Heart left ventricle (tissue), 16 donors: ENCODE measurements at regions of chr18 and their contacts with region 1.

Region 1: DNA sequence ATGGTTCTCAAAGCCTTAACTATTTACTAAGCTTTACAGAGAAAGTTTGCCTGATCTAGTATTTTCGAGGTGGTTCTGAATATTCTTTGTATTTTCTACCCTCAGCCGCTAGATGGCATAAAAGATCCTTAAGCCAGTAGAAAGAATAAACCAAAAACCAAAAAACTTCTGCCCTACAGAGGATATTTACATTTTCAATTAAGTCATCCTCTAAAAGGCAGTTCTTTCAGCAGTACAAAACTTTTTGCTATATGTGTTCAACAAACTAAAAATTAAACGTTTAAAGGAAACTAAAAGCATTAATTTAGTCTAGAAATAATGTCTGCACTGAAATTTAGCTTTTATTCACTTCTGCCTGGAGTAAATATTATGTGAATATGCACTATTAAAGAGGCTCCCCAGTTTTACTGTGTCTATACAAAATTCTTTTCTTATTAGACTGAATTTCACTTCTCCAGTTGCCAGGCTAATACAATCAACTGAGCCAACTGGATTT is 297.5 kb downstream of the PIEZO2 start:
- DNase-seq: no peak
- ATAC-seq: no peak
- H3K4me3 ChIP-seq: no peak overlapping the region
- H3K27ac ChIP-seq: no peak overlapping the region
- H3K4me1 ChIP-seq: no peaks in the 10 kb centered on the region
- H3K27me3 ChIP-seq: peaks cover 0 to 6% (median 0%) of the 10 kb centered on the region in 9 donors
- CTCF ChIP-seq: peak; percentile 57 to 88 (median 75)
- POLR2A ChIP-seq: no peak

Region 2: DNA sequence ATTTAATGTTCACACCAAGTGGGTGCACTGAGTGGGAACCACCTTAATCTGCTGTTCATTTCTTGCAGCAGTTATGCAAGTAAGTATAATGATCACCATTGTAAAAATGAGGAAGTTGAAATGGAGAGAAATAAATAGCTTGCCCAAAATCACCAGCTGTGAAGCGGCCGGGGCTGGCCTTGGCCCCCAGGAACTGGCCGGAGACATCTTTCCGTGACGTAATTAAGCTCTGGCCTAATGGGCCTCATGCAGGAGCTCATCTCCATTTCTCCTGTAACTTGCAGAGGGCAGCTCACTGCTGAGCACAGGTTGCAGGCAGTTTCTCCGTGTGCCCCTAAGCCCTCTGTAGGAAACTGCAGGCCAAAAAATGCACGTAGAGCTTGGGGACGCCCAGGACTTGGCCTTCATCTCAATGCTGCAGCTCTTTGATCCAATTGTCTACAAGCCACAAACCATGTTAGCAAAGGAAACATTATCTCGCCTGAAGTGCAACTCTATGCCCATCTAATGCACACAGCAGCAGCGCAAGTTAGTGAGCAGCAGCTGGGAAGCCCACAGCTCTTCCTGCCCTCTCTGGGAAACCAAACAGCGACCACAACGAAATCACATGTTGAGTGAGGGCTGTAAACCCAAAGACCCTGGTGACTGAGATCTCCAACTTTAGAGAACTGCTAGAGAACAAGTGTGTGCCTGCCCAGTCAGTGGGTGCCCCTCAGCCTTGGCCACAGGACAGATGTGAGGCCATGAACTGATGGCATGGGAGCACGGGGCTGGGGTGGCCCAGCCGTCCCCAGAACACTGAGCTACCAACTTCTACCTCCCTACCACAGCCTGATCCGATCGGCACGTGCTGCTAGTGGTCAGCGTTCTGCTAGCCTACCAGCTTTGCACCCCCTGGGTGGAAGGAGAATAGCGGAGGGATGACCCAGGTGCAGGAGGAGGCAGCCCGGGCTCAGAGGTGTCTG is 368.6 kb before region 1 on chr18:
- intact Hi-C with region 1: no loop called
- DNase-seq: peak in 4 of 5 donors; percentile 48 to 71 (median 54)
- ATAC-seq: peak; percentile 35 to 73 (median 60)
- H3K4me3 ChIP-seq: no peak overlapping the region
- H3K27ac ChIP-seq: peak overlapping the region in 2 of 12 donors; percentile 0 to 32
- H3K4me1 ChIP-seq: peaks cover 0 to 26% (median 2%) of the 10 kb centered on the region in 12 donors
- H3K27me3 ChIP-seq: no peaks in the 10 kb centered on the region
- CTCF ChIP-seq: no peak
- POLR2A ChIP-seq: no peak

Region 3: DNA sequence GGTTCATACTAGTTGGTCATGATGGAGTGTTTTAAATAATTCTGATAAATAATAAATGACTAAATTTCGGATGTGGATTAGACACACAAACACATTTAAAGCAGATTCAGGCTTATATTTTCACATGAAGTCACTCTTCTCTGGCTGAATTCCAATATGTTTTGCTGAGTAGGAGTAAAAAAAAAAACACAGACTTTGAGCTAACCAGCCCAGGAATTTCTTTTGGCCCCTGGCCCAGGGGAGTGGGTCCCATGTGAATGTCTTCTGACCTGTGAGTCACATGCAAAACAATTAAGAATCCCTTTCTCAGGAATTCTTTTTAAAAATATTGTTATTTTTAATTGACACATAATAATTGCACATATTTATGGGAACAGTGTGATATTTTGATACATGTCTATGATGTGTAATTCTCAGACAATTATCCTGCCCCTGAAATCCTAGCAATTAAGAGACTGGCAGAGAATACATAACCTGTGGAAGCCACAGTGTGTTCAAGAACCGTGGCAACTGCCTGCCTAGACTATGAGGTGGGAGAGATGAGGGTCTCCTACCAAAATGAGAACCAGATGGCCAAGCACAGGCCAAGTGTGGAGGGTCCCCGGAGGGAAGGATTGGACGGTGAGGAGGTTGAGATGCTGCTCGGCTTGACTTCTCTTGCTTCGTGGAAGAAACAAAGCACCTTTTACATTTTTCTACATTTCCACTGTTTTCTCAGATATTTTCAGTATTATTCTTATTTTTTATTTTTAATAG is 61.1 kb after region 1 on chr18:
- intact Hi-C with region 1: no loop called
- DNase-seq: peak in 3 of 5 donors; percentile 36 to 64 (median 45)
- ATAC-seq: peak in 1 of 4 donors; percentile 69
- H3K4me3 ChIP-seq: no peak overlapping the region
- H3K27ac ChIP-seq: no peak overlapping the region
- H3K4me1 ChIP-seq: peaks cover 0 to 8% (median 0%) of the 10 kb centered on the region in 12 donors
- H3K27me3 ChIP-seq: no peaks in the 10 kb centered on the region
- CTCF ChIP-seq: no peak
- POLR2A ChIP-seq: no peak

Region 4: DNA sequence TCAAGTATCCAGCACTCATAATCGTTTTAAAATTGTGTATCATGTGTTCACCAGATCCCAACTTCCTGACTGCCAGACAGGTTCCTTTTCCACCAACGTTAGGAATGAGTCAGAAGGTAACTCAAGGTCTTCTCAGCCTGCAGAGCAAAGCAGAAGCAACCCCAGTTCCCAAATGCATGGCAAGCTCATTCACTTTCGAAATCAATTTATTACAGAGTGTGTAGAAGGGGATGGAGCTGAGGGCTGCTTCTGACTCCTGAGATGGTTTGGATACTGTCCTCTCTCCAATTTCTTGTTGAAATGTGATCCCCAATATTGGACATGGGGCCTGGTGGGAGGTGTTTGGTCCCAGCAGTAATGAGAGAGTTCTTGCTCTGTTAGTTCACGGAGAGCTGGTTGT is 183.0 kb after region 1 on chr18:
- intact Hi-C with region 1: loop called in 8 of 10 experiments (anchors 2 to 5 kb)
- DNase-seq: no peak
- ATAC-seq: no peak
- H3K4me3 ChIP-seq: no peak overlapping the region
- H3K27ac ChIP-seq: no peak overlapping the region
- H3K4me1 ChIP-seq: no peaks in the 10 kb centered on the region
- H3K27me3 ChIP-seq: no peaks in the 10 kb centered on the region
- CTCF ChIP-seq: no peak
- POLR2A ChIP-seq: no peak

Region 5: DNA sequence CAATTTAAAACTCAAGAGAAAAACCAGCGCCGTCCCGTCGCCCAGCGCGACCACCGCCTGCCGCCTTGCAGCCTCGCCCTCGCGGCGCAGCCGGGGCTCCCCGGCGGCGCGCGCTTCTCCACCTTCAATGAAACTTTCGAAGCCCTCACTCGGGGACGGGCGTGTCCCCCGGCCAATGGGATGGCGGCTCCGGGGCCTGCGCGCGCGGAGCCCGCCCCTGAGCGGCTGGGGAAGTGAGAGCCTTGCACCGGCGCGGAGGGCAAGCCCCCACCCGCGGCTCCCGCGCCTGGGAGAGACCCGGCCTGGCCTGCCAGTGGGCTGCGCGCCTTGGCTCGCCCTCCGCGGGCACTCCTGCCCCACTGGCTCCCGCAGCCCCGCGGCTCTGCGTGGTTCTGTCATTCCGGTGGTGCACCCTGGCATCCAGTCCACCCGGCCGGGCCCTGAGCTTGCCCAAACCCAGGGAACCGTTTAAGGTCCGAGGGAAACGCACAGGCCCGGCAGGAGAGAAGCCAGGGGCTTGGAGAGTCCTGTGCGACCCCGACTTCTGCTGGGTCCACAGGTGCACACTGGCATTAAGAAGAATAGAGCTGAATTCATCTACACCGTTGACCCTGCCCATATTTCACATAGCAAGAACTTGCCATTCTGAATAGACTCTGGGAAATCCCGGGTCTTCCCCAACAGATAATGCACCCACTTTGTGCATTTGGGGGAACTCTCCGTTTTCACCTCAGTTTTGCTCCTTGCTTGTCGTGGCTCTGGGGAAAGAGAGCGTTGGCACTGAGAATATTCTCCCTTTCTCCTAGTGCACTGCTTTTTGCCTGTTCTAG is 297.8 kb after region 1 on chr18 and contains the start of gene PIEZO2:
- intact Hi-C with region 1: loop called in 8 of 10 experiments (anchors 2 to 5 kb)
- DNase-seq: peak; percentile 31 to 67 (median 39)
- ATAC-seq: peak in 3 of 4 donors; percentile 74 to 78 (median 77)
- H3K4me3 ChIP-seq: peak within 1 kb of the TSS in 11 of 12 donors; percentile 30 to 55 (median 45)
- H3K27ac ChIP-seq: no peak within 1 kb of the TSS
- H3K4me1 ChIP-seq: peaks cover 0 to 22% (median 13%) of the 10 kb centered on the region in 12 donors
- H3K27me3 ChIP-seq: peaks cover 29 to 77% (median 48%) of the 10 kb centered on the region in 9 donors
- CTCF ChIP-seq: no peak
- POLR2A ChIP-seq: no peak
- total RNA-seq, gene PIEZO2: 0.06 to 4.9 (median 0.39) TPM in 7 of 9 donors, not detected in the others

Region 6: GRCh38 chr18:11518788-11519685 is 667.2 kb after region 1 on chr18:
- intact Hi-C with region 1: loop called in 1 of 10 experiments (anchors 10 kb)
- DNase-seq: peak in 2 of 5 donors; percentile 42 to 67
- ATAC-seq: peak in 3 of 4 donors; percentile 48 to 69 (median 65)
- H3K4me3 ChIP-seq: no peak overlapping the region
- H3K27ac ChIP-seq: no peak overlapping the region
- H3K4me1 ChIP-seq: peaks cover 0 to 5% (median 0%) of the 10 kb centered on the region in 12 donors
- H3K27me3 ChIP-seq: no peaks in the 10 kb centered on the region
- CTCF ChIP-seq: peak; percentile 30 to 64 (median 52)
- POLR2A ChIP-seq: no peak

Region 7: DNA sequence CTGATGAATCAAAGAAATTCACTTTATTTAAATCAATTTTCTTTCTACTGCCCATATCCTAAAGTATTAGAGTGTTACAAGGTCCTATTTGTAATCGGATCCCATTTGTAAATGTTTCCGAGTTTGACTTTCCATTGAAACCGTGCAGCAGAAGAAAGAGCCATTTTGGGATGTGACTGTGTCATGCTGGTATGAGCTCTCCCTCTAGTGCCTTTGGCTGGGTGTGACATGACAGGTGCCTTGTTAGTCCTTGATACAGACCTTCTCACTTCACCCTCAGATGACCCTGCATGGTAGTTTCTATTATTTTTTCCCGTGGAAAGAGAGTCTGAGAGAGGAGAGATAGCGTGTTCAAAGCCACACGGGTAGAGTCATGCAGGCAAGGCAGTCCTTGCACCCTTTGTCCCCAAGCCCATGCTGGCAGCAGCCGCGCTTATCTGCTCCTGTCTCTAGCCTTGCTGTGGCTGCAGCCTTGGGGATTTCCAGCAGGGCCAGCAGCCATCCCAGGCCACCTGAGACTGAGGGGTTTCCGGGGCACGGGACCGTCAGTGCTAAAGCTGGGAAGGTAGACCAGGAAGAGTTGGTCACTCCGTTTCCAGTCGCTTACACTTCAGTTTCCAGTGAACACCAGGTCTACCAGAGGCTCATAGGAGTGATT is 1020.7 kb after region 1 on chr18:
- intact Hi-C with region 1: loop called in 1 of 10 experiments (anchors 5 kb)
- DNase-seq: peak in 3 of 5 donors; percentile 25 to 67 (median 50)
- ATAC-seq: peak; percentile 82 to 97 (median 94)
- H3K4me3 ChIP-seq: no peak overlapping the region
- H3K27ac ChIP-seq: peak overlapping the region in 6 of 12 donors; percentile 18 to 61 (median 44)
- H3K4me1 ChIP-seq: peaks cover 0 to 6% (median 0%) of the 10 kb centered on the region in 12 donors
- H3K27me3 ChIP-seq: peaks cover 0 to 3% (median 0%) of the 10 kb centered on the region in 9 donors
- CTCF ChIP-seq: peak in 11 of 12 donors; percentile 19 to 63 (median 46)
- POLR2A ChIP-seq: no peak